ENCODE measurements at regions of chr11 and their contacts with region 1.

Region 1: DNA sequence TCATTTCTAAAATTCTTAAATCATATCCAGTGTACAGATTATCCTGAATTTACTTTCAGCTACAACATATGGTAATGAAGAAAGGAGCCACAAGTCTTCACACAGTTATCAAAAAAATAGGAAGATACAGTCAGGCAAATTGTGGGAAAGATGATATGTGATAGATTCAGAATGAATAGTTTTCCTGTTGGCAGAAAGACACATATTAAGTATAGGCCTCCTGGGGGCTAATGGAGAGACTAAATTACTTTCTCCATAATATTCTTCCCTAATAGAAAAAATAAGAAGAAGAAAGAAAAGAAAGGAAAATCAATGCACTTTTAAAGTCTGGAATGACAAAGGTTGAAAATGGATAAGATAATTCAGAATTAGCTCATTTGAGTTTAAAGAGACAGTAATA is 2073.5 kb downstream of the LRRC4C start:
- DNase-seq: no peak
- ATAC-seq: no peak
- H3K4me3 ChIP-seq: no peak overlapping the region
- H3K27ac ChIP-seq: no peak overlapping the region
- H3K4me1 ChIP-seq: no peaks in the 10 kb centered on the region
- H3K27me3 ChIP-seq: no peaks in the 10 kb centered on the region
- CTCF ChIP-seq: no peak
- POLR2A ChIP-seq: no peak
- RAD21 ChIP-seq: no peak

Region 2: DNA sequence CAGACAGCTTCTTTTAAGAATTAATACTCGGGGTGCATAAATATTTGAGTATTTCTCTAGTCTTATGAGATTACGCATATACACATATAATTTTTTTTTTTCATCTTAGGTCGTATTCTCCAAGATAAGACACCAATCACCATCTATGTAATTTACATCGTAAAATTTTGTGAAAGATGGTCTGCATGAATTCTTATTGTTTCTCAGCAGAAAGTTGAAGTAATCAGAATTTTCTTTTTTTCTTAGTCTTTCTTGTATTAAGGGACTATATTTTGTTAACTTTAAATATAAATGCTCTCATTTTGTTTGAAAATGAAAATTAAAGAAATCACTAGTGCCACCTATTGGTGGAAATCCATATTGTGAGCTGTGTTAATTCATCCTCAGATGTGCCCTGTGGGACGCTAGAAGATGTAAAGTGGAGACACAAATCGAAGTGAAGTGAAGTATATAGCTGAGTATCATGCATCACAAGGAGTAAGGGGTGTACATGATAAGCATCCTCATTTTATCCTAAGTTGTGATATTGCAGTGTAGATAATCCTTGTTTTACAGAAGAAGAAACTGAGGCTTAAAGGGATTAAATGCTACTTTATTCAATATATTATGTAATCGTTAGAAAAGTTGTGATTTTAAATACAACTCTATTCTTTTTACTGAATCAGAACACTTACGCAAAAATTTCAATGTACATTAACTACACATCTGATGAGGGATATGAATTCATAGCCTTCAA is 10.8 kb before region 1 on chr11:
- CTCF ChIA-PET with region 1: interaction called, 9 read pairs
- POLR2A ChIA-PET with region 1: interaction called, 13 read pairs
- dilution Hi-C with region 1: no loop called
- in situ Hi-C with region 1: no loop called
- intact Hi-C with region 1: no loop called
- DNase-seq: peak; percentile 2
- ATAC-seq: no peak
- H3K4me3 ChIP-seq: no peak overlapping the region
- H3K27ac ChIP-seq: no peak overlapping the region
- H3K4me1 ChIP-seq: no peaks in the 10 kb centered on the region
- H3K27me3 ChIP-seq: no peaks in the 10 kb centered on the region
- CTCF ChIP-seq: peak; percentile 27
- POLR2A ChIP-seq: no peak
- RAD21 ChIP-seq: no peak